ENCODE measurements at regions of chr14 and their contacts with region 1.

Region 1: DNA sequence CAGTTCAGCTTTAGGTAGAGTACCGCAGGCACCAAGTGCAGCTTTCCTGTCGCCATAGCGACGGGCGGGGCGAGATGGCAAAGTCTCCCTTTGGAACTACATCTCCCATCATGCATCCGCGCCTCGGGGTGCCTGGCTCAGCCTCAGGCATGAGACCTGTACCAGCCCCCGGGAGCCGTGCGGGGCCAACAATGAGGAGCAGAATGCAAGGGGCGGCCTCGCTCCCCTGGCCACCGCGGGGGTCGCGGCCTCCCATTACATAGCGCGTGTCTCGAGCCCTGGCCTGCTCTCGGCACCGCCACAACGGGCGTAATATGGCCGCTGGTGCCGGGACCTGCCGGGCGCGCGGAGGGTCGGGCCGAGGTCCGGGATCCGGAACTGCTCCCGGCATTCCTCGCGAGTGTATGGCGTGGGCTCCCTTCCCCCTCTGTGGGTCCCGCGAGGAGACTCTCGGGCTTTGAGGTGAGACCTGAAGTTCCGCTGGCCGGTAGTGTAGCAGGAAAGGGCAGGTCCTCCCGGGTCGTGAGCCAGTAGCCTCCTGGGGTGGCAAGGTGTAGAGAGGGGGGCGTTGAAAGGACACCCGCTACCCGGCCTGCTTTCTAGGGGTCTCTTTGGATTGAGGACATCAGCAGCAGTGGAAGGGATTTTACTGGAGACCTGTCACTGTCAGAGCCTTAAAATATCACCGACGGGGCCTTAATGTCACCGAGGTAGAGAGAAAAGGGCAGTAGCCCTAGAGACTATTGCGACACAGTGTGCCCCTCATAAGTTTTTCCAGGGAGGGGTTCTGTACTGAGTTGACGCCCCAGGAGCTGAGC is at the start of gene THTPA:
- DNase-seq: peak; percentile 81 to 85
- ATAC-seq: peak; percentile 90
- H3K4me3 ChIP-seq: peak within 1 kb of the TSS; percentile 86 to 98 (median 94)
- H3K27ac ChIP-seq: peak within 1 kb of the TSS; percentile 94 to 100 (median 96)
- H3K4me1 ChIP-seq: peaks cover 22 to 23% of the 10 kb centered on the region in 2 donors
- H3K27me3 ChIP-seq: no peaks in the 10 kb centered on the region
- CTCF ChIP-seq: no peak
- POLR2A ChIP-seq: peak in 1 of 2 donors; percentile 17
- total RNA-seq, gene THTPA: 13.2 to 32.9 (median 21.4) TPM

Region 2: GRCh38 chr14:22929104-22929847 is 626.8 kb before region 1 on chr14 and contains the start of gene PRMT5:
- in situ Hi-C with region 1: no loop called
- intact Hi-C with region 1: loop called (anchors 10 kb)
- DNase-seq: peak; percentile 100
- ATAC-seq: peak; percentile 98 to 99
- H3K4me3 ChIP-seq: peak within 1 kb of the TSS; percentile 78 to 95 (median 86)
- H3K27ac ChIP-seq: peak within 1 kb of the TSS; percentile 89 to 96 (median 94)
- H3K4me1 ChIP-seq: peaks cover 9 to 11% of the 10 kb centered on the region in 2 donors
- H3K27me3 ChIP-seq: no peaks in the 10 kb centered on the region
- CTCF ChIP-seq: no peak
- POLR2A ChIP-seq: peak; percentile 84 to 92
- total RNA-seq, gene PRMT5: 67.2 to 83.2 (median 78.6) TPM

Region 3: GRCh38 chr14:23327947-23328744 is 227.9 kb before region 1 on chr14:
- in situ Hi-C with region 1: loop called in 3 of 4 experiments (anchors 10 to 25 kb)
- intact Hi-C with region 1: loop called (anchors 5 kb)
- DNase-seq: peak; percentile 38 to 59
- ATAC-seq: peak; percentile 57 to 90
- H3K4me3 ChIP-seq: no peak overlapping the region
- H3K27ac ChIP-seq: no peak overlapping the region
- H3K4me1 ChIP-seq: peaks cover 2 to 7% of the 10 kb centered on the region in 2 donors
- H3K27me3 ChIP-seq: no peaks in the 10 kb centered on the region
- CTCF ChIP-seq: peak; percentile 79 to 85 (median 81)
- POLR2A ChIP-seq: no peak

Region 4: GRCh38 chr14:23478111-23478759 is 77.9 kb before region 1 on chr14:
- in situ Hi-C with region 1: loop called in 3 of 4 experiments (anchors 5 kb)
- intact Hi-C with region 1: no loop called
- DNase-seq: peak; percentile 25 to 26
- ATAC-seq: peak; percentile 58 to 60
- H3K4me3 ChIP-seq: no peak overlapping the region
- H3K27ac ChIP-seq: no peak overlapping the region
- H3K4me1 ChIP-seq: no peaks in the 10 kb centered on the region
- H3K27me3 ChIP-seq: no peaks in the 10 kb centered on the region
- CTCF ChIP-seq: peak; percentile 62 to 69 (median 67)
- POLR2A ChIP-seq: no peak

Region 5: DNA sequence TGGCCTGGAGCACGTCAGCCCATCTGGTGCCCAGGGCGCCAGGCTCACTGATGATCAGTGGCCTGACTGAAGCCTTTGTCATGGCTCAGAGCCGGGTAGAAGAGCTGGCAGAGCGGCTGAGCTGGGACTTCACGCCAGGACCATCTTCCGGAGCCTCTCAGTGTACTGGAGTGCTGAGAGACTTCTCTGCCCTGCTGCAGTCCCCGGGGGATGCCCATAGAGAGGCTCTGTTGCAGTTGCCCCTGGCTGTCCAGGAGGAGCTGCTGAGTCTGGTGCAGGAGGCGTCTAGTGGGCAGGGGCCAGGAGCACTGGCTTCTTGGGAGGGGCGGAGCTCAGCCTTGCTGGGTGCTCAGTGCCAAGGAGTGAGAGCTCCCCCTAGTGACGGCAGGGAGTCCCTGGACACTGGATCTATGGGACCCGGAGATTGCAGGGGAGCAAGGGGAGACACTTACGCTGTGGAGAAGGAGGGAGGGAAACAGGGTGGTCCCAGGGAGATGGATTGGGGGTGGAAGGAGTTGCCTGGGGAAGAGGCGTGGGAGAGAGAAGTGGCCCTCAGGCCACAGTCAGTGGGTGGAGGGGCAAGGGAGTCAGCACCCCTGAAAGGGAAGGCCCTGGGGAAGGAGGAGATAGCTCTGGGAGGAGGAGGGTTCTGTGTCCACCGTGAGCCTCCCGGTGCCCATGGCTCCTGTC is 875.6 kb after region 1 on chr14:
- in situ Hi-C with region 1: no loop called
- intact Hi-C with region 1: loop called (anchors 10 kb)
- DNase-seq: peak; percentile 76 to 87
- ATAC-seq: peak; percentile 51 to 70
- H3K4me3 ChIP-seq: peak overlapping the region in 3 of 4 donors; percentile 62 to 81 (median 76)
- H3K27ac ChIP-seq: peak overlapping the region; percentile 85 to 90 (median 86)
- H3K4me1 ChIP-seq: peaks cover 19 to 22% of the 10 kb centered on the region in 2 donors
- H3K27me3 ChIP-seq: no peaks in the 10 kb centered on the region
- CTCF ChIP-seq: peak; percentile 79 to 92 (median 88)
- POLR2A ChIP-seq: no peak